ENCODE measurements at regions of chrX and their contacts with region 1.

Region 1: DNA sequence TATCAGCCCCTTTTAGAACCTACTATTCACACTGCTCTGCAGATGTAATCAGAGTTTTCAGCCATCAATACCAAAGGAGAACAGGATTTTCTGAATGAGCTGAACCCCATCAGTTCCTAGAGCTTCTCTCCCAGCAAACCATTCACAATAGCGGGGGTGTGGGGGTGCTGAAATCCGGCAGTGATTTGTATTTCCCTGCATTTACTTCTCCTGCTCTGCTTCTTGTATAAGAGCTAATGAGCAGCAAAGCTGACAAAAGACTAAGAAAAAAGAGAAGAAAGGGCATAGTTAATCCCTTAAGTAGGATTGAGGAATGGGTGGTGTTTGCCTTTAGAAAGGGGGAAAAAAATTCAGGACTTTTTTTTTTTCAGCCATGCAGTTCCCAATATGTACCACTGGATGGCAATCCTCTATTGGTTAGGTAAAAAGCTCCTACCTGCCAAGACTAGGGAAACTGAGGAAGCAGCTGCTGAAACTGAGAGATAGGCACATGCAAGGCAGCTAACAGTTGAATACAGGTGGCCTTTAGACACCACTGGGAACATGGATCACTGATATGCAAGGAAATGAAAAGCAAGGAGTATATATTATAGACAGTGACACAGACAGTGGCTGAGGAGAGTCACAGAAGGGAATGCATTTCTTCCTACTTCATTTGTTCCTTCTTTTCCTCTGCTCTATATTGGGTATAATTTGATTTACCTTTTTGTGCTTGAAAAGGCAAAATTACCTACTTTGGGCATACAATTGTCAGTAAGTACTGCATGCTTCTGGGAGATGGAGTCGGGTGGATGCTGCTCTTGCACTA is 217.9 kb downstream of the HS6ST2 start:
- DNase-seq: no peak
- ATAC-seq: no peak
- H3K4me3 Mint-ChIP-seq: no peak overlapping the region
- H3K27ac Mint-ChIP-seq: no peak overlapping the region
- H3K4me1 Mint-ChIP-seq: peaks cover 16% of the 10 kb centered on the region
- H3K27me3 Mint-ChIP-seq: no peaks in the 10 kb centered on the region

Region 2: GRCh38 chrX:132676561-132677186 is 63.8 kb before region 1 on chrX:
- CTCF ChIA-PET with region 1: no interaction called
- POLR2A ChIA-PET with region 1: no interaction called
- intact Hi-C with region 1: no loop called
- DNase-seq: peak; percentile 4
- ATAC-seq: peak; percentile 33
- H3K4me3 Mint-ChIP-seq: no peak overlapping the region
- H3K27ac Mint-ChIP-seq: no peak overlapping the region
- H3K4me1 Mint-ChIP-seq: peaks cover 3% of the 10 kb centered on the region
- H3K27me3 Mint-ChIP-seq: peaks cover 3% of the 10 kb centered on the region

Region 3: DNA sequence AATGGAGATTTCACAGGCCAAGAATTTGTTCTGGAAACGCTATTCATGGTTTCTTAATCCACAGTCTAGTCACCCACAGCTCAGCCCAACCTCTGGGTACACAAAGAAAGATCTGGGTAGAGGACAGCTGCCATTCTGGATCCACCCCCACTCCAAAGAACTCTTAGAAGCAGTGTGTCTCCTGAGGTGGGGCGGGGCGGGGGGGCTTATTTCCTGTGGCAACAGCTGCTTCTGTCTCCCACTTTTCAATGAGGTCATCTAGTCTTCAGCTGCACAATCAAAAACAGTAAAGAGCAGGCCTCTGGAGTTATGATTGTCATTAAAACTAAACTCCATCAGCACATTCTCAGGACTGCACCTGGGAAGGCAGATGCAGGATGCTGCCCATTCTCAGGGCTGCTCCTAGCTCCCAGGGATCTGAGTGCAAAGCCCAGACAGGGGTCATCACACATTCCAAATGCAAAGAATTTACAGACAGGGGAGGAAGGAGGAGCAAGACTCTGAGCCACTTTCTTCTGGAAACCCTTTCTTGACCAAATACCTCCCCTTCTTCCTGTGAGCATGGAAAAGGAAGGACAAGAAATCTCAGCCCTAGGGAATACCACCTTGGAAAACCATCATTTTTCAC is 10.7 kb after region 1 on chrX:
- CTCF ChIA-PET with region 1: interaction called, 10 read pairs
- POLR2A ChIA-PET with region 1: no interaction called
- intact Hi-C with region 1: no loop called
- DNase-seq: no peak
- ATAC-seq: no peak
- H3K4me3 Mint-ChIP-seq: no peak overlapping the region
- H3K27ac Mint-ChIP-seq: no peak overlapping the region
- H3K4me1 Mint-ChIP-seq: no peaks in the 10 kb centered on the region
- H3K27me3 Mint-ChIP-seq: no peaks in the 10 kb centered on the region

Region 4: DNA sequence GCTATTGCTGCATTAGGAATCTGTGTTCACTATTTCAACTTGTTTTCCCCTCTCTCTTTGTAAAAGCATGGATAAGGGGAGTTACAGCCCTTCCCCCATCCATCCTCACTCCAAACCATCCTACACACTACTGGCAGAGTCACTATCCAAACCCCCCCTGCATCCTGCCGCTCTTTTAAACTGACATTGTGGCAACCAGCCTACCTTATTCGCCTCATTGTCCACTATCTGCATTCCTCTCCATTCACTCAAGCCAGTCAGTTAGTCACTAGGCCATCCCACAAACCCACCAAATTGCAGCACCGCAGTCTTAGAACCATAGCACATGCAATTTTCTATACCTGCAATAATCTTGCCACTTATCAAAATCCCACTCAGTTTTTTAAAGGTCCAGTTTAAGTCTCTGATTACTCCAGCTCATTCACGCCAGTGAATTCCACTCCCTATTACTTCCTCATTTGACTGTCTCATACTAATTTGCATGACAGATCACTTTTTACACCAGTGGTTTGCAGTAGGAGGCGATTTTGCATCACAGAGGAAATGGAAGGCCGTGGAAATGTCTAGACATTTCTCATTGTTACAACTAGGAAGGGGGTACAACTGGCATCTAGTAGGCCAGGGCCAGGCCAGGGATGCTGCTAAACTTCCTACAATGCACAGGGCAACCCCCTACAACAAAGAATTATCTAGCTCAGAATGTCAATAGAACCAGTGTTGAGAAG is 36.1 kb after region 1 on chrX:
- CTCF ChIA-PET with region 1: interaction called, 4 read pairs
- POLR2A ChIA-PET with region 1: no interaction called
- intact Hi-C with region 1: loop called in 1 of 2 experiments (anchors 2 kb)
- DNase-seq: no peak
- ATAC-seq: no peak
- H3K4me3 Mint-ChIP-seq: no peak overlapping the region
- H3K27ac Mint-ChIP-seq: no peak overlapping the region
- H3K4me1 Mint-ChIP-seq: peaks cover 27% of the 10 kb centered on the region
- H3K27me3 Mint-ChIP-seq: no peaks in the 10 kb centered on the region

Region 5: GRCh38 chrX:132957211-132958090 is 216.9 kb after region 1 on chrX:
- CTCF ChIA-PET with region 1: no interaction called
- POLR2A ChIA-PET with region 1: no interaction called
- intact Hi-C with region 1: loop called in 1 of 2 experiments (anchors 5 kb)
- DNase-seq: peak; percentile 34
- ATAC-seq: peak; percentile 45
- H3K4me3 Mint-ChIP-seq: peak overlapping the region; percentile 62
- H3K27ac Mint-ChIP-seq: no peak overlapping the region
- H3K4me1 Mint-ChIP-seq: peaks cover 2% of the 10 kb centered on the region
- H3K27me3 Mint-ChIP-seq: peaks cover 32% of the 10 kb centered on the region

Measured in activated CD4-positive, alpha-beta T cell treated with anti-CD3 and anti-CD28 coated beads for 36 hours (primary cell).